Right ventricle myocardium superior (tissue), 1 donor: ENCODE measurements at regions of chr12 and their contacts with region 1.

Region 1: DNA sequence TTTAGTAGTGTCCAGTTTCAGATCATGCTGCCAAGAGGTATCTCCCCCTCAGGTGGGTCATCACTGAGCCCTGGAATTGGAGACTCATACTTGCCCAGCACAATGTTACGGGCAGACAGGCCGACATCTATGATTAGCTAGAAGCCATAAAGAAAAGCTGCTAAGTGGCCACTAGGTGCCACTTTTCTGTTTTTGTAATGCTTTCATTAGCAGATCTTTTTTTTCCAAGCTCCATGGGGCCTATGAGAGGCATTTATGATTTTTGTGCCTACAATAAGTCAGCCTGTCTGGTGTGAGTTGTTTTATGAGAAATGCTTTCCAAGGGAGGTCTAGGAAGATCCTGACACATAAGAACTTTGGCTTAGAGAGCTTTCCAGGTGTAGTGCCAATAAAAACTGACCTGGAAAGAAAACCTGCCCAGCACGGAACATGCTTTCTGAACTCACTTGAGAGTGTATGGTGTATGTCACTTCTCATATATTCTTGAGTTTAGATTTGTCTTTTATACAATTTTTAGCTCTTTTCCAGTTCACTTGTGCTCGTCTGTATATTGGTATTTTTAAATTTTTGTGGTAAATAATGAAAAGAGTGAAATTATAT is 21.8 kb upstream of the SMCO2 start:
- DNase-seq: no peak
- ATAC-seq: peak; percentile 90

Region 2: DNA sequence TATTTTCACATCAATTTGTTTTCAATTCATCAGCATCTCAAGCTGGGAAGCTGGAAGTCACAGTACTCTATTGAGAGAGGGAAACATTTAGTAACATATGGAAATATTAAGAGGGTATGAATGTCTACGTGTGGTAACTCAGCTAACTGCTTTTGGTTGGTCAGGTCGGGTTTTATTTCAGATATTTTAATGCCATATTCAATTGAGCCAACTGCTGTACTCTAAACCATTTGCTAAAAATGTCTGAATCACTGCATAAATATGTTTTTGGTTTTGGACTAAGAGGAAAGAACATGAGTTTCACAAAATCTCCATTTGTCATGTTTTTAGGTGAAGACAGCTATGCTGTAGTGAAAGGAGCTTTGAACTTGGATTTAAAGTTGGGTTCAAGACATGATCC is 80.4 kb after region 1 on chr12:
- intact Hi-C with region 1: loop called (anchors 5 kb)
- DNase-seq: no peak
- ATAC-seq: no peak

Region 3: DNA sequence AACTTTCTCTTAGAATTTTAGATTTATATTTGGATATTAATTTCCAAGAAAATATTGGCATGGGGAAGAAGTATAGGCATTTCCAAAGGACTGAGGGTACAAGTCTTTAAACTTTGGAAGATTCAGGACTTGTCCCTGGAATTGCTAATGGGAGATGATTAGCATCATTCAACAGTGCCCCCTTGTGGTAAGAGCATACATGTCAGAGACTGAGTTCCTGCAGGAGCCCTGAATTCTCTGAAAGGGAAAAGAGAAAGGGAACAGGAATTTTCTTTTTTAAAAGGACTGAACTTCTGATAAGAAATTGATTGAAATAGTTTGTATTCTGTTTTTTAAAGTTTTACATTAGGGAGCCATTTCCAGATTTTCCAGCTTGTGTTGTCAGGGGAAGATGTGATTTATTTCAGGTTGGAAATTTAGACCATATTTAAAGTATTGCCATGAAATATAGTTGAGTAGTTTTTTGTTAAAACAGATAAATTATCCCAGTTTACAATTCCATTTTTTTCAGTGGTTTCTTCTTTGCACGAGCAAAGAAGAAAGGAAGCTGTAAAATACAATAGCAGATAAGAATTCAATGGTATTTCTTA is 227.5 kb after region 1 on chr12:
- intact Hi-C with region 1: loop called (anchors 5 kb)
- DNase-seq: no peak
- ATAC-seq: peak; percentile 89